Adrenal gland (tissue), 19 donors: ENCODE measurements at regions of chr13 and their contacts with region 1.

Region 1: GRCh38 chr13:48244159-48244558 is 11.2 kb downstream of the ITM2B start:
- DNase-seq: no peak
- H3K4me3 ChIP-seq: no peak overlapping the region
- H3K27ac ChIP-seq: no peak overlapping the region
- H3K4me1 ChIP-seq: peaks cover 17 to 95% of the 10 kb centered on the region in 2 donors
- H3K27me3 ChIP-seq: no peaks in the 10 kb centered on the region
- CTCF ChIP-seq: no peak
- POLR2A ChIP-seq: no peak

Region 2: GRCh38 chr13:48291730-48292129 is 47.6 kb after region 1 on chr13:
- intact Hi-C with region 1: loop called in 1 of 2 experiments (anchors 10 kb)
- DNase-seq: peak in 2 of 7 donors; percentile 26 to 58
- H3K4me3 ChIP-seq: no peak overlapping the region
- H3K27ac ChIP-seq: no peak overlapping the region
- H3K4me1 ChIP-seq: no peaks in the 10 kb centered on the region
- H3K27me3 ChIP-seq: no peaks in the 10 kb centered on the region
- CTCF ChIP-seq: no peak
- POLR2A ChIP-seq: no peak